Heart right ventricle (tissue), 16 donors: ENCODE measurements at regions of chr9 and their contacts with region 1.

Region 1: GRCh38 chr9:35954942-35955546 is 2.9 kb downstream of the OR2S2 start:
- DNase-seq: peak in 1 of 2 donors; percentile 54
- ATAC-seq: peak; percentile 61 to 84 (median 77)
- H3K4me3 ChIP-seq: no peak overlapping the region
- H3K27ac ChIP-seq: peak overlapping the region in 1 of 10 donors; percentile 8
- H3K4me1 ChIP-seq: peaks cover 0 to 14% (median 3%) of the 10 kb centered on the region in 9 donors
- H3K27me3 ChIP-seq: no peaks in the 10 kb centered on the region
- CTCF ChIP-seq: peak; percentile 81 to 92 (median 90)

Region 2: GRCh38 chr9:35657546-35658136 is 297.4 kb before region 1 on chr9 and contains the start of gene RMRP:
- intact Hi-C with region 1: no loop called
- DNase-seq: peak; percentile 96 to 98
- ATAC-seq: peak; percentile 94 to 97 (median 96)
- H3K4me3 ChIP-seq: peak within 1 kb of the TSS; percentile 73 to 98 (median 88)
- H3K27ac ChIP-seq: peak within 1 kb of the TSS; percentile 95 to 99 (median 98)
- H3K4me1 ChIP-seq: peaks cover 0 to 56% (median 34%) of the 10 kb centered on the region in 9 donors
- H3K27me3 ChIP-seq: no peaks in the 10 kb centered on the region
- CTCF ChIP-seq: peak in 7 of 9 donors; percentile 14 to 59 (median 46)
- total RNA-seq, gene RMRP: 3,879 to 14,997 (median 5,788) TPM

Region 3: DNA sequence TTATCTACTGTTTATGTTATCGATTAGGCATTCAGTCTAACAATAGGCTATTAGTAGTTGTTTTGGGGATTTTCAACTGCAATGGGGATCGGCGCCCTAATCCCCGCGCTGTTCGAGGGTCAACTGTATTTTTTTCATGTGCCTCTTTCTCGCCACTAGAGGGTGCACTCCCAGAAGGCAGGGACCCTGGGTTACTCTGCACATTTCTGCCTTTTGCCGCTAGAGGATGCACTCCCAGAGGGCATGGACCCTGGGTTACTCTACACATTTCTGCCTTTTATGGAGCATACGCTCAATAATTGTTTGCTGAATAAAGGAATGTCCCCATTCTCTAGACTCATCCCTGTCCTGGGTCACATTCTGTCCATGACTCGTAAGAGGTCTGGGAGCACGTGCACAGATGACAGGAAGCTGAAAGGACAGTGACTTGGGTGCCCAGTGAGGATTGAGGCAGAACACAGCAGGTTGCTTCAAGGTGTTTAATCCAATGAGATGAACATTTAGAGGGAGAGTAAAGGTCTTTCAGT is 53.8 kb after region 1 on chr9:
- intact Hi-C with region 1: loop called in 1 of 10 experiments (anchors 5 kb)
- DNase-seq: peak; percentile 26 to 34
- ATAC-seq: peak in 7 of 8 donors; percentile 64 to 87 (median 73)
- H3K4me3 ChIP-seq: no peak overlapping the region
- H3K27ac ChIP-seq: no peak overlapping the region
- H3K4me1 ChIP-seq: peaks cover 0 to 6% (median 0%) of the 10 kb centered on the region in 9 donors
- H3K27me3 ChIP-seq: peaks cover 0 to 6% (median 0%) of the 10 kb centered on the region in 7 donors
- CTCF ChIP-seq: peak; percentile 87 to 99 (median 95)

Region 4: DNA sequence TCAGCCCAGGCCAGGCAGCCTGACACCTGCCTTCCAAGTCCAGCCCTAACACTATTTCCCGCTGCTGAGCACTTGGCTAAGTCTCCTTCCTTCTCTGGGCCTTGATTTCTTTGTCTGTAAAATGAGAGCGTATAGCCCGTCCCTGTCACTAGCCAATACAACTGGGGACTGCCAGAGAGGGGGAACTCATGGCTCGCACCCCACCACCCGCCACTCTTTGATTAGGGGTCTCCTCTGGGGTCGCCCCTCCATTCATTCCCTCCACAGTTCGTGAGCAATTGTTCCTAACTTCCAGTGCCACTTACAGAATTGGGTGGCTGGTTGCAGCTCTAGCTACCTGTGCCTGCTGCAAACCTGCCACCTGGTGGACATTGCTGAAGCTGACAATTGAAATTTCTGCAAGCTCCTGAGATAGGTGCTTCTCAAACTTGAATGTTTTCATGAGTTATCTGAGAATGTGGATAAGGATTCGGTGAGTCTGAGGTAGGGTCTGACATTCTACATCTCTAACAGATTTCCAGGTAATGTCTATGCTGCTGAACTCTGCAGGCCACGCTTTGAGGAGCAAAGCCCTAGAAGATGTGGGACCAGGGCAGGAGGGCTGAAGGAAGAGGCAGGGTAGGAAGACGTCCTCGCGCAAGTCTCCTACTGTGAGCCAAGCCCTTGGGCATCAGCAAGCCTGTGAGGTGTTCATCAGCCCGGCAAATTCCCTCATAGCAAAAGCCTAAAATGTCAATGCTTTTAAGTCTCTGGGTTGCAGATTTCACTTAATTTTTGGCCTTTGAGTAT is 68.4 kb after region 1 on chr9:
- intact Hi-C with region 1: loop called (anchors 1 to 5 kb)
- DNase-seq: peak; percentile 29 to 62
- ATAC-seq: peak; percentile 17 to 72 (median 60)
- H3K4me3 ChIP-seq: no peak overlapping the region
- H3K27ac ChIP-seq: no peak overlapping the region
- H3K4me1 ChIP-seq: peaks cover 0 to 11% (median 0%) of the 10 kb centered on the region in 9 donors
- H3K27me3 ChIP-seq: no peaks in the 10 kb centered on the region
- CTCF ChIP-seq: peak; percentile 64 to 88 (median 83)